Cardiac septum (tissue), 1 donor: ENCODE measurements at regions of chr10 and their contacts with region 1.

Region 1: GRCh38 chr10:73997787-73998622 is at the start of gene VCL:
- DNase-seq: peak; percentile 99
- total RNA-seq, gene VCL: 284 TPM

Region 2: DNA sequence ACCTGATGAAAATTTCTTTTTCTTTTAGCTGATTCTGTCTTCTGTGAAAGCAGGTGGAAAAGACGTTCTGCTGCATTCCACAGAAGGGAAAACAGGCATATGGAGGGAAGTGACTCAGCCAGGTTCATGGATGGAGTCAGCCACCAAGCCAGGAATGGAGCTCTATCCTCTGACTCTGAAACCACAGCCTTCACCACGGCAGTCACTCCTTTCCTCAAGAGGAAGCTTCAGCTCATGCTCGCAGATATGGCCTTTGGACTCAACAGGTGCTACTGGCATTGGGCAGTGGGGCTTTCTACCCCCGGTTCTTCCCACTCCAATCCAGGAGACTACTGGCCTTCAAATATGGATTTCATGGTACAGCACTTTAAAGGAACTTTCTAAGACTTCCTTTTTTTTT is 98.6 kb before region 1 on chr10:
- intact Hi-C with region 1: no loop called
- DNase-seq: no peak

Region 3: DNA sequence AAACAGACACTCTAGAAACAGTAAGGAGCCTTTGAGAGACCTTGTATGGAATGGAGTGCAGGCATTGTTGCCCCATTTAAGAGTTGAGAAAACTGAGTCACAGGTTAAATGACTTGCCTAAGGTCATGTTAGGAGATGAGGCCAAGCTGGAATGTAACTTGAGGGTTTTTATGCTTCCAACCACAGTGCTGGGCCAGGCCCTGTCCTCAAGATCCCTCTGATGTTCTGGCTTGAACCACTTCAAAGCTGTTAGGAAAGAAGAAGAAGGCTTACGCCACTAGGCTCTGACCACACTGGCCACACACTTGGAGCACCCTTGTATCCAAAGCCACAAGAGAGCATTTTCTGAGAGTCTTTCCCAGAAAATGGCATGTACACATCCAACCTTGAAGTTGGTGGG is 44.3 kb before region 1 on chr10:
- intact Hi-C with region 1: no loop called
- DNase-seq: no peak

Region 4: GRCh38 chr10:73965890-73966768 is 31.9 kb before region 1 on chr10:
- intact Hi-C with region 1: loop called (anchors 2 kb)
- DNase-seq: peak; percentile 85

Region 5: DNA sequence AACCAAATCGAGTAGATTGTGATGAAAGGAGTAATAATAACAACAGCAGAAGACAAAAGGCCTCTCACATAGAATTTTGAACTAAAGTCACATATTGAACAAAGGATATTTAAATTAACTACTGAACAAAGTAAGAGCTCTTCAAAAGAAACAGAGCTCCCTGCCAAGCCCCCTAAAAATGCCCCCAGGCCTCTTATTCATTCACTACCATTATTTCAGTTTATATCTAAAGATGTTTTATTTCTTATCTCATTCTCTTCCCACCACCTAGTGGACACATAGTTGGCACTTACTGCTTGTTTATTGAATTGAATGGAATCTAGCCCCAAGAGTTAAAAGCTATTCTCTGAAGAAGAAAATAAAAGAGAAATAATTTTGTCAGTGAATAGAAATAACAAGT is 37.3 kb after region 1 on chr10:
- intact Hi-C with region 1: loop called (anchors 5 kb)
- DNase-seq: no peak

Region 6: GRCh38 chr10:74058658-74059057 is 60.7 kb after region 1 on chr10:
- intact Hi-C with region 1: loop called (anchors 5 kb)
- DNase-seq: no peak

Region 7: GRCh38 chr10:74081192-74081803 is 83.3 kb after region 1 on chr10:
- intact Hi-C with region 1: loop called (anchors 5 kb)
- DNase-seq: no peak

Region 8: DNA sequence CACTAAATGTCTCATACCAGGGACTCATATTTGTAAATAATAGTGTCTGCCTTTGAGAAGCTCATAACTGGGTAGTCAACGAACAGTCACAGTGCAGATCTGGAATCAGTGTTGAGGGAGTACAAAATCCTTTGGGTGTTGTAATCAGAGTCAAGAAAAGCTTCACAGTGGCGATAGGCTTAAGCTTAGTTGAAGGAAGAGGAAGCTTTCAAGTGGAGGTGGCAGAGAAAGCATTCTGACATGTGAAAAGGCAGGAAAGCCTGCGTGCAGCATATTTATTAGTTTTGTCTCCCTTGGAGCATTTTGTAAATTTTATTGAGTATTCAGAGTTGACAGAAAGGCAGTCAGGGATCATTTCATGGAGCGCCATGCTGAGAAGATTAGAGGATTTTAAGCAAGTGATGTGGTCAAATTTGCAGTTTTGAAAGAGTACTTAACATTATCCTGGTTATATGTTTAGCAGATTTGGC is 257.9 kb after region 1 on chr10:
- intact Hi-C with region 1: no loop called
- DNase-seq: no peak